Heart right ventricle (tissue), 16 donors: ENCODE measurements at regions of chr14 and their contacts with region 1.

Region 1: GRCh38 chr14:76710056-76711010 is 50.9 kb upstream of the VASH1 start:
- DNase-seq: peak in 1 of 2 donors; percentile 54
- ATAC-seq: peak in 7 of 8 donors; percentile 43 to 69 (median 52)
- H3K4me3 ChIP-seq: no peak overlapping the region
- H3K27ac ChIP-seq: peak overlapping the region in 2 of 10 donors; percentile 15 to 20
- H3K4me1 ChIP-seq: peaks cover 0 to 26% (median 19%) of the 10 kb centered on the region in 9 donors
- H3K27me3 ChIP-seq: no peaks in the 10 kb centered on the region
- CTCF ChIP-seq: peak; percentile 70 to 83 (median 79)

Region 2: GRCh38 chr14:76767681-76768656 is 57.6 kb after region 1 on chr14:
- intact Hi-C with region 1: loop called in 5 of 10 experiments (anchors 5 kb)
- DNase-seq: peak; percentile 77 to 89
- ATAC-seq: peak; percentile 79 to 91 (median 86)
- H3K4me3 ChIP-seq: peak overlapping the region in 4 of 10 donors; percentile 6 to 25 (median 10)
- H3K27ac ChIP-seq: peak overlapping the region; percentile 57 to 95 (median 82)
- H3K4me1 ChIP-seq: peaks cover 29 to 99% (median 81%) of the 10 kb centered on the region in 9 donors
- H3K27me3 ChIP-seq: peaks cover 0 to 3% (median 0%) of the 10 kb centered on the region in 7 donors
- CTCF ChIP-seq: no peak

Region 3: GRCh38 chr14:76806446-76806845 is 96.1 kb after region 1 on chr14:
- intact Hi-C with region 1: loop called in 3 of 10 experiments (anchors 2 to 5 kb)
- DNase-seq: no peak
- ATAC-seq: no peak
- H3K4me3 ChIP-seq: no peak overlapping the region
- H3K27ac ChIP-seq: no peak overlapping the region
- H3K4me1 ChIP-seq: peaks cover 0 to 24% (median 15%) of the 10 kb centered on the region in 9 donors
- H3K27me3 ChIP-seq: no peaks in the 10 kb centered on the region
- CTCF ChIP-seq: no peak

Region 4: GRCh38 chr14:76863724-76864407 is 153.5 kb after region 1 on chr14:
- intact Hi-C with region 1: loop called in 1 of 10 experiments (anchors 10 kb)
- DNase-seq: peak; percentile 48 to 86
- ATAC-seq: peak; percentile 79 to 93 (median 90)
- H3K4me3 ChIP-seq: peak overlapping the region in 8 of 10 donors; percentile 21 to 56 (median 43)
- H3K27ac ChIP-seq: peak overlapping the region; percentile 36 to 92 (median 84)
- H3K4me1 ChIP-seq: peaks cover 8 to 70% (median 51%) of the 10 kb centered on the region in 9 donors
- H3K27me3 ChIP-seq: no peaks in the 10 kb centered on the region
- CTCF ChIP-seq: no peak

Region 5: GRCh38 chr14:77076113-77076631 is 365.8 kb after region 1 on chr14:
- intact Hi-C with region 1: loop called in 2 of 10 experiments (anchors 10 kb)
- DNase-seq: peak; percentile 81 to 89
- ATAC-seq: peak; percentile 90 to 96 (median 93)
- H3K4me3 ChIP-seq: peak overlapping the region in 8 of 10 donors; percentile 24 to 42 (median 30)
- H3K27ac ChIP-seq: peak overlapping the region; percentile 79 to 95 (median 92)
- H3K4me1 ChIP-seq: peaks cover 9 to 41% (median 28%) of the 10 kb centered on the region in 9 donors
- H3K27me3 ChIP-seq: no peaks in the 10 kb centered on the region
- CTCF ChIP-seq: no peak